ENCODE measurements at regions of chr15 and their contacts with region 1.

Region 1: DNA sequence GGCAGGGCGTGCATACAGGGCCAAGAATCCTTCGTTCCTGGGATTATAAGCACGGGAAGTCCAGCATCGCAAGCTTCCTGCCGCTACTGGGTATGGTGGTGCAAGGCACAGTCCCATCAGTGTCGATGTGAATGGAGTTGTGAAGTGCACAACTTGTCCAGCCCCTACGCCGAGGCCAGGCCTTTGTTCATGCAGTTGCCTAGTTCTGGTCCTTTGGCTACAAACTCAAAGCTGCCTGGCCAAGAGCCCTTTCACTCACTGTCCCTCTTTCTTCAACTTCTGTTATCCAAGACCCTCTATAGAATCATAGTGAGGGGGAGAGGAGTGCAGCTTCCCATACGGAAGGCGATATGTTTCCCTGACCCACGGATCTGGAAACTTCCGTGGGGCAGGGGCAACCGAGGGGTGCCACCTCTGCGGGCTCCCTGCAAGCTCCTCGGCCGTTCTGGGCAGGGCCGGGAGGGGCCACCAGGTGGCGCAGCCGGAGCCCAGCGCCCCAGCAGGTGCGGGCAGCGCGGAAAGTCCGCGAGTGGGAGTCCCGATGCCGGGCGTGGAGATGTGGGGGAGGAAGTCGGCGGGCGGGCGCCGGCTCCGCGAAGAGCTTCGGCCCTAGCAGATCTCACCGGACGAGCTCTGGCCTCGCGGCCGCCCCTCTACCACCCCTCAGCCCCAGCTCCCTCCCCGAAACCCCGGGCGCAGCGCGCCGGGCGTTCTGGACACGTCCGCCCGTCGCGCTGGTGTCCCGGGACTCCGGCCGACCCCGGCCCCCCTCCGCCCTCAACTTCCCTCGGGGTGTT is 693 bp downstream of the RASGRP1 start:
- DNase-seq: peak; percentile 83
- ATAC-seq: peak; percentile 95 to 96
- H3K4me3 ChIP-seq: peak overlapping the region; percentile 61
- H3K27ac ChIP-seq: peak overlapping the region; percentile 74
- H3K4me1 ChIP-seq: peaks cover 20% of the 10 kb centered on the region
- H3K27me3 ChIP-seq: peaks cover 24% of the 10 kb centered on the region
- CTCF ChIP-seq: peak; percentile 87

Region 2: DNA sequence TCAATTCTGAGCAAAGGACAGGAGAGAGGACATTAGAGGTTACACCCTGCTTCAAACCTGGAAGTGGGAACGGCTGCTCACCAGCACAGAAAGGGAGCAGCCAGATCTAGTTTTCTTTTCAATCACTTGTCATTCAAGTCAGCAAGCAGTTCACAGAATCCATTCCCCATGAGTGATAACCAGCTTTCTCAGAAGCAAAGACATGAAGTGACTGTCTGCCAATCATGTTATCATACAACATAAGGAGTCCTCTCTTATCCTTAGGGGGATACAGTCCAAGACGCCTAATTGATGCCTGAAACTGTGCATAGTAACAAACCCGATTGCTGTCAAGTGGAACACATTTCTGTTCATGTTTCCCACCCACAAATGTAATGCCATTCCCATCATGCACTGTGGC is 55.3 kb before region 1 on chr15:
- intact Hi-C with region 1: no loop called
- DNase-seq: no peak
- ATAC-seq: no peak
- H3K4me3 ChIP-seq: no peak overlapping the region
- H3K27ac ChIP-seq: no peak overlapping the region
- H3K4me1 ChIP-seq: no peaks in the 10 kb centered on the region
- H3K27me3 ChIP-seq: no peaks in the 10 kb centered on the region
- CTCF ChIP-seq: no peak

Region 3: DNA sequence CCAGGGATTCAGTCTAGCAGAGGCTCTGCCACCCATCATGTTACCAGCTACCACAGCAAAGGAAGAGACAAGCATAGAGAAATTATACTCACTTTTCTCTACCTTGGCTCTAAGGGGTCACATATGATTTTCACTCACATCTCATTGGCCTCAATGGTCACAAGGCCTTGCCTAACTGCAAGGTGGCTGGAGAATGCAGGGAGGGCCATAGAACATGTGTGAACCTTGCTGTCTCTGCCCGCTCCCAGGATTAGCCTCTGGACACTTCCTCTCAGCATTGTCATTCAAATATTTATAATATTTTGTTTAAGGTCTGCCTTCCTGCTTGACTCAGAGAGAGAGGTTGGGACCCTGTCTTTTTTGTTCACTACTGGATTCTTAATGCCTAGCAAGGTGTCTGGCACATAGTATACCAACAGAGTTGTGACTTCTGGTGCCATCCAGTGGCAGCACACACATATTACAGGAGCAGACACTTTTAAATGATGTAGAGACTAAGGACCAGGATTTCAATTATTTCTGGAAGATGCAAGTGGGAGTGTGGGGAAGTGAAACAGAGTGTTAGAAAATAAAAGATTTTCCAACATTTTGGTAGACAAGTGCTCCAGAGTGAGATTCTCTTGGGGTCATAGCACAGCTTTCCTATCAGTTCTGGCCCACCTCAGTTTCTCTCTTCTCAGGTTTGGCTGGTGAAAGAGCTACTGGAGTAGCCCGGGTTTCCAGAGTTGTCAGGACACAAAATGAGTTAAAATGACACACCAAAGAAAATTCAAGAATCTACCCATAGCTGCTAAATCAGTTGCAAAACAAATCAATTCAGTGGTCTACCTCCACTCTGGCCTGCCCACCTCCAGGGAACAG is 119.7 kb after region 1 on chr15:
- intact Hi-C with region 1: loop called (anchors 10 kb)
- DNase-seq: peak; percentile 53
- ATAC-seq: peak; percentile 89 to 90
- H3K4me3 ChIP-seq: no peak overlapping the region
- H3K27ac ChIP-seq: no peak overlapping the region
- H3K4me1 ChIP-seq: peaks cover 4% of the 10 kb centered on the region
- H3K27me3 ChIP-seq: no peaks in the 10 kb centered on the region
- CTCF ChIP-seq: peak; percentile 80

Region 4: DNA sequence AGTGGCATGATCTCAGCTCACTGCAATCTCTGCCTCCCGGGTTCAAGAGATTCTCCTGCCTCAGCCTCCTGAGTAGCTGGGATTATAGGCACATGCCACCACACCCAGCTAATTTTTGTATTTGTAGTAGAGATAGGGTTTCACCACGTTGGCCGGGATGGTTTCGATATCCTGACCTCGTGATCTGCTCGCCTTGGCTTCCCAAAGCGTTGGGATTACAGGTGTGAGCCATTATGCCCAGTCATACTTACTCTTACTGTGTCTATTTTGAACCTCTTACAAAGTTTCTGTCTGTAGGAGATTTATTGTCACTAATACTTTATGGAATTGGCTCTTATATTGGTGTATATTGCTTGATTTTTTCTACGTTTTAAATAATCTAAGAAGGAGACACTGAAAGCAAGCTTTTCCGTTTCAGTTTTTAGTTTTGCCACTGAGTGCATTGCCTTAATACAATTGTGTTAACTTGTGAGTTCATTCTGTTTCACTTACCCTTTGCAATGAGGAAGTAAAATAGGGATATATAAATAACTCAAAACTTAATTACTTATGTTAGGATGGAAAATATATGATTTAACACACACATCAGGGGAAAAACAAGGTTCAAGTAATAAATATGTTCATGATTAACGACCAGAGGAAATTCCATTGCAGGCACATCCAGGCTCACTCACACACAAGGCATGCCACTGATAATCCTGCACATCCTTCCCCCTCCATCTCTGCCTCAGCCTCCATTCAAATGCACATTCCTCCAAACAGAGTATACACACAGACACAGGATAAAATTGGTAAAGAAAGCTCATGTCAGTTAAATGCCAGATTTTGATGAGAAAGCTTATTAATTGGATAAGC is 280.0 kb after region 1 on chr15:
- intact Hi-C with region 1: no loop called
- DNase-seq: no peak
- ATAC-seq: no peak
- H3K4me3 ChIP-seq: no peak overlapping the region
- H3K27ac ChIP-seq: no peak overlapping the region
- H3K4me1 ChIP-seq: no peaks in the 10 kb centered on the region
- H3K27me3 ChIP-seq: no peaks in the 10 kb centered on the region
- CTCF ChIP-seq: no peak